IMR-90 (cell line): ENCODE measurements at regions of chr10 and their contacts with region 1.

Region 1: DNA sequence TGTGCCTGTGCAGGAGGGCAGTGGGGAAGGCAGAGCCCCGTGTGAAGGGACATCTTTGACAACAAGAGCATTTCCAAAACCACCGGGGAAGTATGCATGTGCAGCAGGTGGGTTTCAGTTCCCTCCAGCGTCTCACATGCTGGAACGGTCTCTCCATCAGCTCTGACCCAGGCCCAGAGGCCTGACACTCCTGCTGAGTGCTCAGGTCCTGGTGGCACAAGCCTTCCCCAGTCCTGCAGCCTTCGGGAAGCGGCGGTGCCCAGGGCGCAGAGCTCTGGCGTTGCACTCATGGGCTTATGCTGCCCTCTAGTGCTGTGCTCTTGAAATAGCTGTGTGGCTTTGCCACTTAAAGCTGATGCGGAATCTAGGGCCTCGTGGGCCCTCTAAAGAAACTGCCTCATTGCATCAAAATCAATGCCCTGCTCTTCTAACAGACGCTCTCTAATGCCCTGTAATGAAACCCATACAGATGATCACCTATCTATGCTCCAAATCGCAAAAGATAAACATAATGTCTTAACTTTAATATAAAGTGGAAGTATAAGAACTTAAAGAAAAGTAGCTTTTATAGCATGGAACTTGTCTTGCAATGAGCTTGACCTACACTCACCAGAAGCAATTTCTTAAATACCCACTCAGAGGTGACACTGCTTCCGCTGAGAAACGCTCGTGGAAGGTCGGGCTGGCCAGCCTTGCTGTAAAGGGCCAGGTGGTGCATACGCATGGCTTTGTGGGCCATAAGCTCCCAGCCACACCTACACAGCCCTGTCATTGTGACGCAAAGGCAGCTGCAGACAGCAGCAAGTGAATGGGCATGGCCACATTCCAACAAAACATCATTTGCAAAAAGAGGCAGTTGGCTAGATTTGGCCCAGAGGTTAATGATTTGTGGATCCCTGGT is 38.6 kb downstream of the CLRN3 start:
- DNase-seq: peak; percentile 47
- ATAC-seq: peak; percentile 99
- H3K4me3 ChIP-seq: no peak overlapping the region
- H3K27ac ChIP-seq: no peak overlapping the region
- H3K4me1 ChIP-seq: no peaks in the 10 kb centered on the region
- H3K27me3 ChIP-seq: no peaks in the 10 kb centered on the region
- CTCF ChIP-seq: peak; percentile 62
- POLR2A ChIP-seq: no peak
- RAD21 ChIP-seq: peak; percentile 77

Region 2: GRCh38 chr10:125928928-125929585 is 1925.1 kb before region 1 on chr10:
- CTCF ChIA-PET with region 1: no interaction called
- POLR2A ChIA-PET with region 1: no interaction called
- dilution Hi-C with region 1: no loop called
- in situ Hi-C with region 1: no loop called
- intact Hi-C with region 1: loop called (anchors 1 kb)
- DNase-seq: no peak
- ATAC-seq: no peak
- H3K4me3 ChIP-seq: no peak overlapping the region
- H3K27ac ChIP-seq: no peak overlapping the region
- H3K4me1 ChIP-seq: no peaks in the 10 kb centered on the region
- H3K27me3 ChIP-seq: no peaks in the 10 kb centered on the region; the same call in 1 of the 2 replicates
- CTCF ChIP-seq: no peak
- POLR2A ChIP-seq: no peak
- RAD21 ChIP-seq: no peak

Region 3: GRCh38 chr10:127081851-127082345 is 772.2 kb before region 1 on chr10:
- CTCF ChIA-PET with region 1: no interaction called
- POLR2A ChIA-PET with region 1: no interaction called
- dilution Hi-C with region 1: no loop called
- in situ Hi-C with region 1: no loop called
- intact Hi-C with region 1: loop called (anchors 10 kb)
- DNase-seq: no peak
- ATAC-seq: no peak
- H3K4me3 ChIP-seq: no peak overlapping the region
- H3K27ac ChIP-seq: no peak overlapping the region
- H3K4me1 ChIP-seq: no peaks in the 10 kb centered on the region
- H3K27me3 ChIP-seq: no peaks in the 10 kb centered on the region
- CTCF ChIP-seq: no peak
- POLR2A ChIP-seq: no peak
- RAD21 ChIP-seq: no peak

Region 4: GRCh38 chr10:127492607-127493250 is 361.4 kb before region 1 on chr10:
- CTCF ChIA-PET with region 1: interaction called, 7 read pairs
- POLR2A ChIA-PET with region 1: no interaction called
- dilution Hi-C with region 1: no loop called
- in situ Hi-C with region 1: no loop called
- intact Hi-C with region 1: loop called (anchors 10 kb)
- DNase-seq: no peak
- ATAC-seq: peak; percentile 74
- H3K4me3 ChIP-seq: no peak overlapping the region
- H3K27ac ChIP-seq: no peak overlapping the region
- H3K4me1 ChIP-seq: no peaks in the 10 kb centered on the region
- H3K27me3 ChIP-seq: peaks cover 1% of the 10 kb centered on the region; the same call in 1 of the 2 replicates
- CTCF ChIP-seq: no peak
- POLR2A ChIP-seq: no peak
- RAD21 ChIP-seq: no peak

Region 5: GRCh38 chr10:128254476-128254875 is 400.4 kb after region 1 on chr10:
- CTCF ChIA-PET with region 1: no interaction called
- POLR2A ChIA-PET with region 1: no interaction called
- dilution Hi-C with region 1: no loop called
- in situ Hi-C with region 1: no loop called
- intact Hi-C with region 1: no loop called
- DNase-seq: no peak
- ATAC-seq: no peak
- H3K4me3 ChIP-seq: no peak overlapping the region
- H3K27ac ChIP-seq: no peak overlapping the region
- H3K4me1 ChIP-seq: no peaks in the 10 kb centered on the region
- H3K27me3 ChIP-seq: no peaks in the 10 kb centered on the region
- CTCF ChIP-seq: no peak
- POLR2A ChIP-seq: no peak
- RAD21 ChIP-seq: no peak